Panc1 (cell line): ENCODE measurements at regions of chr13 and their contacts with region 1.

Region 1: GRCh38 chr13:57018915-57019314 is 121.8 kb upstream of the PRR20A start:
- DNase-seq: no peak
- ATAC-seq: no peak
- H3K4me3 ChIP-seq: no peak overlapping the region
- H3K27ac ChIP-seq: no peak overlapping the region
- H3K4me1 ChIP-seq: no peaks in the 10 kb centered on the region
- H3K27me3 ChIP-seq: no peaks in the 10 kb centered on the region
- CTCF ChIP-seq: no peak

Region 2: DNA sequence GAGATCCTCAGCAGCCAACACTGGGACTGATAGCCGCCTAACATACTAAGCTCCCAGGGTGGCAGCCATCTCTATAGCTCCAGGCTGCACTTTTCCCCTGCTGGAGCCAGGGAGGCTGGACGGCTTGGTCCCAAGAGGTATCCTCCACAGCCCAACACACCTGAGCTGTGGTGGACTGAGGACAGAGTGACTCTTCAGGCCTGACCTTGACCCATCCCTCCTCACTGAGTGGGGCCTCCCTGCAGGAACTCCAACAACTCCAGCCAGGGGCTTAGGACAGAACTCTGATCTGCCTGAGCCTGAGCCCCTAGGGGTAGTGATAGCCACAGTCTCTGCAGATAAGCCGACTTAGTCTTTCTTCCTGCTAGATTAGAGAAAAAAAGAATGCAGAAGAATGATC is 836.3 kb before region 1 on chr13:
- CTCF ChIA-PET with region 1: no interaction called
- POLR2A ChIA-PET with region 1: no interaction called
- in situ Hi-C with region 1: no loop called
- intact Hi-C with region 1: no loop called
- DNase-seq: no peak
- ATAC-seq: no peak
- H3K4me3 ChIP-seq: no peak overlapping the region
- H3K27ac ChIP-seq: no peak overlapping the region
- H3K4me1 ChIP-seq: no peaks in the 10 kb centered on the region
- H3K27me3 ChIP-seq: no peaks in the 10 kb centered on the region
- CTCF ChIP-seq: no peak

Region 3: DNA sequence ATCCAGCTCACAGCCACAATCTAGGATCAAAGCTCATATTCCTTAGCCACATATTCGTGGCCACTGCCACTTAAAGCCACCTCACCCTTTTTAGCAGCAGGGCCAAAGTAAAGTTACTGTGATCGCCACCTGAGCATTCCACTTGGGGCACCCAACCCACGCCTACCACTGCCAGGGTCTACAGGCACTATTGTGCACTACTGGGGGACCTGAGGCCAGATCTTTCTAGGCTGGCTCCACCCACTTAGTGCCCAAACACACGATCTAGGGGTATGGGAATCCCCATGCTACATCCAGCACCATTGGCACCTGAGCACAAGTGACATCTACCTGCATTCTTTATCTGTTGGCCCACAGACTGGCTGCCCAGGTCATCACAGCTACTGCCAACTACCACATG is 396.1 kb before region 1 on chr13:
- CTCF ChIA-PET with region 1: no interaction called
- POLR2A ChIA-PET with region 1: interaction called, 10 read pairs
- in situ Hi-C with region 1: no loop called
- intact Hi-C with region 1: no loop called
- DNase-seq: no peak
- ATAC-seq: no peak
- H3K4me3 ChIP-seq: no peak overlapping the region
- H3K27ac ChIP-seq: no peak overlapping the region
- H3K4me1 ChIP-seq: no peaks in the 10 kb centered on the region
- H3K27me3 ChIP-seq: no peaks in the 10 kb centered on the region
- CTCF ChIP-seq: no peak

Region 4: GRCh38 chr13:56975647-56976046 is 43.3 kb before region 1 on chr13:
- CTCF ChIA-PET with region 1: no interaction called
- POLR2A ChIA-PET with region 1: no interaction called
- in situ Hi-C with region 1: no loop called
- intact Hi-C with region 1: no loop called
- DNase-seq: no peak
- ATAC-seq: no peak
- H3K4me3 ChIP-seq: no peak overlapping the region
- H3K27ac ChIP-seq: no peak overlapping the region
- H3K4me1 ChIP-seq: no peaks in the 10 kb centered on the region
- H3K27me3 ChIP-seq: no peaks in the 10 kb centered on the region
- CTCF ChIP-seq: no peak